Activated CD4-positive, alpha-beta memory T cell treated with anti-CD3 and anti-CD28 coated beads for 36 hours (primary cell): ENCODE measurements at regions of chr9 and their contacts with region 1.

Region 1: DNA sequence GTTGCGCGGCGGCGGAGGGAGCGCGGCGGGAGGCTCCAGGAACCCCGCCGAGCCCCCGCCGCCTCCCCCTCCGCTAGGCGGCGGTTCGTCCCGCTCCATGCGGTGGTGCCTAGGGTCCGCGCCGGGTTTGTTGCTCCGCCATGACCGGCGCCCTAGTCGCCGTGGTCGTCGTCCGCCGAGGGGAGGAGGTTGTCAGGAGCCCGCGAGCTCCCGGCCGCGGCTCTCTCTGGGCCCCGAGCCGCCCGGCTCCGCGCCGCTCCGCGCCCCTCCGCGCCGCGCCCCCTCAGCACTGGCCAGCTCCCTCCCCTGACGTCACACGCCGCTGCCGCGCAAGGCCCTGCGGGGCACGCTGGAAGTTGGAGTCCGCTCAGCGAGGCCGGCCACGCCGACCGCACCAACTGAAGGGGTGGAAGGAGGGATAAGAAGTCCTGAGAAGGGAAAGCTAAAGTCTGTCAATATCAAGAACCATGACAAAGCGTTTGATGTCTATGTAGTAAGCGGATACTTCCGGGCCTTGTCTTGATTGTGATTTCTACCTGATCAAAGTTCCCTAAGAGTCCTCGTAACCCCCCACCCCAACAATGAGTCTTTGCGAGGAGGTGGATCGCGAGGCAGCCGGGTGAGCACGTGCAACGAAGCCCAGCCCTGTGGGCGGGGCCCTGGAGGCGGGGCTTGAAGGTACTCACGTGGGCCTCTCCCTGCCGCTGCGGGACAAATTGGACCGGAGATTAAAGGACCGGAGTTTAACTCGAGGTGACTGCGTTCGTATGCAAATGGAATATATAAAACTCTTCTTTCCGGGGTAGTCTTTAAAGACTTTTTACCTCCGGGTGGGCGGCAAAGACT is at the start of gene NR6A1:
- DNase-seq: peak; percentile 94
- H3K4me3 Mint-ChIP-seq: peak within 1 kb of the TSS; percentile 79
- H3K27ac Mint-ChIP-seq: peak within 1 kb of the TSS; percentile 77
- H3K4me1 Mint-ChIP-seq: peaks cover 43% of the 10 kb centered on the region
- H3K27me3 Mint-ChIP-seq: peaks cover 64% of the 10 kb centered on the region
- total RNA-seq, gene NR6A1: 0.61 to 0.83 TPM

Region 2: DNA sequence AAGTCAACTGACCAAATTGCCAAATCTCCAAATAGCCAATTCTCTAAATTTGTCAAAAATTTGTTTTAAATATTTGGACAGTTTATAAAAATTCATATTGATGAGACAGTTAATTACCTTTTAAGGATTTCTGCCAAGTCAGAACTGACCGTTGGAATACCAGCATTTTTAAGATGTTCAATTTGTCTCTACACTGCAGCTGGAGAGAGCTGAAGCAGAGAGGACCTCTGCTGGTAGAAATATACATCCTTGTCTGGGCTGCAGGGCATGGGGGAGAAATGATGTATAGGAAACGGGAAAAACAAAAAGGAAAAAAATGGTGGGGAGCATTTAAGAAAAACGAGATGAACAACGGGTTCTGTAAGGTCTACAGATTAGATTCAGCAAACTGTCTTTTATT is 17.0 kb before region 1 on chr9:
- CTCF ChIA-PET with region 1: interaction called, 14 read pairs
- POLR2A ChIA-PET with region 1: no interaction called
- intact Hi-C with region 1: loop called (anchors 2 kb)
- DNase-seq: no peak
- H3K4me3 Mint-ChIP-seq: no peak overlapping the region
- H3K27ac Mint-ChIP-seq: no peak overlapping the region
- H3K4me1 Mint-ChIP-seq: peaks cover 15% of the 10 kb centered on the region
- H3K27me3 Mint-ChIP-seq: peaks cover 52% of the 10 kb centered on the region

Region 3: DNA sequence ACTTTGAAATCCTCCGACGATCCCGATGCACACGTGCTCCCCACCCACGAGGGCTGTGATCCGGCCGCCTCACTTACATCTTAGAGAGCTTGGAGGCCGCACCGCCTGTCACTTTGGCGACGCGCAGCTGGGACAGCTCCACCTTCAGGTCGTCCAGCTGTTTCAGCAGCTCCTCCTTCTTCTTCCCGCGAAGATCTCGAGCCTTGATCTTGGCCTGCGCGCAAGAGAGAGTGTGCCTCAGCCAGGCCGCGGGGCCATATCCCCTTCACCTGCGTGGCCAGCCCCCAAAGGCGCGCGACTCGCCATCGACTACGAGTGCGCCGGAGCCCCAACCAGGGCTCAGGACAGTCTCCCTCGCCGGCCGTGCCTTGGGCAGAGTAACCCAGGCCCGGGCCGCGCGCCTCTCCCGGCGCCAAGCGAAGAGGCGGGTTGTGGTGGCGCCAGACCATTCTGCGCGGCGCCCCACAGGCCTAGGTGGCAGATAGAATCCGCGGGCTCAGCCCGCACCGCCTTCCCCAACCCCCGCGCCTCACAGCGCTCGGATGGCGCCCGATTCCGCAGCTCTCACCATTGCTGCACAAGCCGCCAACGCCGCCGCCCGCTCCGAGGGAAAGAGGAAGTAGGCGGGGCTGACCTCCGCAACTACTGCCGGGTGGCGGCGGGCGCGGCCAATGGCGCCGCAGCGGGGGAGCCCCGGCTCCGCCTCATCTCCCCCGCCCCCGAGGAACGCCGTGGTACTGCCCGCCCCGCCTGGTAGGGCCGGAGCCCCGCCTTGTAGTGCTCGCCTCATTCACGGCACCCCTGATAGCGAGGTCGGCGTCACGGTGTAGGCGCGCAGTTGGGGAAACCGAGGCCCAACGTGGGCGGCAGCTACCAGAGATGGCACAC is 90.3 kb after region 1 on chr9 and contains the starts of genes ARPC5L and RPL35:
- CTCF ChIA-PET with region 1: interaction called, 530 read pairs
- POLR2A ChIA-PET with region 1: interaction called, 18 read pairs
- intact Hi-C with region 1: loop called (anchors 1 kb)
- DNase-seq: peak; percentile 96
- H3K4me3 Mint-ChIP-seq: peak within 1 kb of the TSS; percentile 88
- H3K27ac Mint-ChIP-seq: peak within 1 kb of the TSS; percentile 94
- H3K4me1 Mint-ChIP-seq: peaks cover 42% of the 10 kb centered on the region
- H3K27me3 Mint-ChIP-seq: no peaks in the 10 kb centered on the region
- total RNA-seq, gene ARPC5L: 104 to 108 TPM
- total RNA-seq, gene RPL35: 2,083 to 2,096 TPM

Region 4: DNA sequence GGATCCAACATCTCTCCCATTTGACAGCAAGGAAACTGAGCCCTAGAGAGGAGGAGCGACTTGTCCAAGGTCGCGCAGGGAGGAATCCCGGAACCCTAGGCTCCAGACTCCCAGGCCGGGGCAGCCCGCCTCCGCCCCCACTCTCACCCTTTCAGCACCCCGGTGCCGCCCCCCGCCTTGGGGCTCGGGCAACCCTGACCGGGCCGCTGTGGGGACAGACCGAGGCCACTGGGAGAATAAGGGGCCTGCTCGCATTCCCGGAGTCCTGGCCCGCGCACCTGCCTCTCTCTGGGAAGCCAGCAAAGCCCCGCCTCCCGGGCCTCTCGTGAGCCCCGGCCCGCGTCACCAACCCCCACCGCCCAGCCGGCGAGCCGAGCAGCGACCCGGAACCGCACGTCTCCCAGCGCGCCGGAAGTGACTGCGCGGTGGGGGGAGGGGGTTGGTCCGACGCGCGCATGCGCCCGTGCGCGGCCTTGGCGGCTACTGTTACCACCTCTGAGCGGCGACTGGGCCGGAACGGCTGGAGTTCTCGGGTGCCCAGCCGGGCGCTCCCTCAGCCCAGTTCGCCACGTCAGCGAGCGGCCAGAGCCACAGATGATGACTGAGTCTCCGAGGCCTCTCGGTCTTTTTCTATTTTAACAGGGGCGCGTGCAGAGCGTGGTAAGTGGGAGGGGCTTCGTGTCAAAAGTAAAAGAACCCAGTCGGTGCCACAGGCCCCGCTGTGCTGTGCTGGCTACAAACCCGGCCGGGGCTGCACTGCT is 169.6 kb after region 1 on chr9 and contains the start of gene GOLGA1:
- CTCF ChIA-PET with region 1: interaction called, 3 read pairs
- POLR2A ChIA-PET with region 1: no interaction called
- intact Hi-C with region 1: loop called (anchors 2 kb)
- DNase-seq: peak; percentile 95
- H3K4me3 Mint-ChIP-seq: peak within 1 kb of the TSS; percentile 79
- H3K27ac Mint-ChIP-seq: peak within 1 kb of the TSS; percentile 89
- H3K4me1 Mint-ChIP-seq: peaks cover 24% of the 10 kb centered on the region
- H3K27me3 Mint-ChIP-seq: no peaks in the 10 kb centered on the region
- total RNA-seq, gene GOLGA1: 14.1 to 15.3 TPM

Region 5: DNA sequence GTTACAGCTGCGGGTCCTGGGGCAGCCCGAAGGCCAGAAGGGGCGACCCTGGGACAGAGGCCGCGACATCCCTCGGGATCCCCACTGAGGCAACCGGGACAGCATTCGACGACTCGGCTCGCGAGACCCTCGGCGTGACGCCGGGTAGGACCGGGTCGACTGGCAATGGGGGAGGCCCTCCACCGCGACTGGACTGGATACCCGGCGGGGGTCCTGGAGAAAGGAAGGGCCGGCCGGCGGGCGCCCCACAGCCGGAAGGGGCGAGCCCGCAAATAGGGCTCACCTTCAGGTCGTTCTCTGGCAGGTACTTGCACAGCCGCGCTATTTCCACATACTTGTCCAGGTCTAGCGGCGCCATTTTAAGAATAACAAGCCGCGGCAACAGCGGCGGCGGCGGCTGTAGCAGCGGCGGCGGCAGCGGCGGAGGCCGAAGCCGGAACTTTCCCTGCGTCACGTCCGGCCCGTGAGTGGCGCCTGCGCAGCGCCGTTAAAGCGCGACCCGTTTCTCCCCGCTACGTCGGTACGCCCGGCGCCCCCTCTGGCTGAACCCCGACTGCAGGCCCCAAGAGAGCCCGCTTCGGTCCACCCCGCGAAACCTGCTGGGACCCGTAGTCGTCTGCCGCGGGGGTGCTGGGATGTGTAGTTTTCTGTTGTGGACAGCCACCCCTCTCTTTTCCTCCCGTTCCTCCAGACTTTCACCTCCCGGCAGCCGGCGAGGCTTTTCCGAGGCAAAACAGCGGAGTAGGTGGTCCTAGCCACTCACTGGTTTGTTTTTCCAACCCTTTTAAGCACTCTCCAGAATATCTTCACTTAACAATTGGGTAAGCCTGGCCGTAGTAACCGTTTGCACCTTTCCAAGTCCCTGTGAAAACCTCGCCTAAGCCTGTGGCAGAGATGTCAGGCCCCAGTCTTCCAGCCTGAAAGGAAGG is 418.4 kb after region 1 on chr9 and contains the start of gene PPP6C:
- CTCF ChIA-PET with region 1: no interaction called
- POLR2A ChIA-PET with region 1: no interaction called
- intact Hi-C with region 1: loop called (anchors 5 kb)
- DNase-seq: peak; percentile 99
- H3K4me3 Mint-ChIP-seq: peak within 1 kb of the TSS; percentile 97
- H3K27ac Mint-ChIP-seq: peak within 1 kb of the TSS; percentile 95
- H3K4me1 Mint-ChIP-seq: peaks cover 54% of the 10 kb centered on the region
- H3K27me3 Mint-ChIP-seq: no peaks in the 10 kb centered on the region
- total RNA-seq, gene PPP6C: 46.7 to 47.4 TPM

Region 6: DNA sequence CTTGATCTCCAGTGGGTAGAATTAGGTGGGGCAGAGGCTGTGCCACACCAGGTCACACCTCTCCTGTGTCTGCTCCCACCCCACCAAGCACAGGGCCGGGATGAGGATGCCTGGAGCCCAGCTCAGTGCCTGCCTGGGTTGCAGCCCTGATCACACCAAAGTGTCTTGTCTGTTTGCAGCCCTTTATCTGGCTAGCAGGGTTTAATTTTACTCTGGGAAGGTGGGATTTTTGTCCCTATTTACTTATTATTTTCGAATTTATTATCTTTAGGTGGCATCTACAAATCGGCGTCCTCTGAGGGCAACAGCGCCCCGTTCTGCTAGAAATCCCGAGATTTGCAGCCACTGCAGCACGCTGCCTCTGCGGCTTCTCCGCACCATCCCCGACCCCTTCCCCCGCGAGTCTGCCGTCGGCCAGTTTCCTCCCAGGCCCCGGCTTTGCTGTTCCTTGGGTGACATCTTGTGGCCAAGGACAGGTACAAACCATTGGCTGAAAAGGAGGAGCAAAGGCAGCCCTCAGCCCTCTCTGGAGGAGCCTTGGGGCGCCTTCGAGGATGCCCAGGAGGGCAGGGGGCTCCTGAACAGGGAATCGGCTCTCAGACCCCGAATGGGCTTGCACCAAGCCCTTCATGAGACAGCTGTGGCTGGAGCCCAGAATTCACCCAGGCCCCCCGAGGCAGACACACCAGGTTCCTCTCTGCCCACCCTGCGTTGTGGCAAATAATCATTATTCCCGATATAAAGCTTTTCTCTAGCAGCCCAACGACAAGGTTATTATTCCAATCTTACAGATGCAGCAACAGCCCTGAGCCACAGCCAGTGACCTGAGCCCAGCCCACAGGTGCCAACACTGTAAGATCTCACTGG is 603.4 kb after region 1 on chr9:
- CTCF ChIA-PET with region 1: interaction called, 4 read pairs
- POLR2A ChIA-PET with region 1: no interaction called
- intact Hi-C with region 1: loop called (anchors 1 kb)
- DNase-seq: peak; percentile 79
- H3K4me3 Mint-ChIP-seq: peak overlapping the region; percentile 45
- H3K27ac Mint-ChIP-seq: no peak overlapping the region
- H3K4me1 Mint-ChIP-seq: peaks cover 7% of the 10 kb centered on the region
- H3K27me3 Mint-ChIP-seq: no peaks in the 10 kb centered on the region